ENCODE measurements at regions of chr12 and their contacts with region 1.

Region 1: GRCh38 chr12:53321074-53321814 is at the start of gene AAAS:
- DNase-seq: peak; percentile 91 to 99
- H3K4me3 ChIP-seq: peak within 1 kb of the TSS; percentile 65 to 67
- H3K27ac ChIP-seq: peak within 1 kb of the TSS; percentile 84 to 87
- H3K4me1 ChIP-seq: peaks cover 4 to 30% of the 10 kb centered on the region in 2 donors
- H3K27me3 ChIP-seq: no peaks in the 10 kb centered on the region
- CTCF ChIP-seq: peak; percentile 97 to 98 (median 97)
- total RNA-seq, gene AAAS: 21.2 TPM

Region 2: DNA sequence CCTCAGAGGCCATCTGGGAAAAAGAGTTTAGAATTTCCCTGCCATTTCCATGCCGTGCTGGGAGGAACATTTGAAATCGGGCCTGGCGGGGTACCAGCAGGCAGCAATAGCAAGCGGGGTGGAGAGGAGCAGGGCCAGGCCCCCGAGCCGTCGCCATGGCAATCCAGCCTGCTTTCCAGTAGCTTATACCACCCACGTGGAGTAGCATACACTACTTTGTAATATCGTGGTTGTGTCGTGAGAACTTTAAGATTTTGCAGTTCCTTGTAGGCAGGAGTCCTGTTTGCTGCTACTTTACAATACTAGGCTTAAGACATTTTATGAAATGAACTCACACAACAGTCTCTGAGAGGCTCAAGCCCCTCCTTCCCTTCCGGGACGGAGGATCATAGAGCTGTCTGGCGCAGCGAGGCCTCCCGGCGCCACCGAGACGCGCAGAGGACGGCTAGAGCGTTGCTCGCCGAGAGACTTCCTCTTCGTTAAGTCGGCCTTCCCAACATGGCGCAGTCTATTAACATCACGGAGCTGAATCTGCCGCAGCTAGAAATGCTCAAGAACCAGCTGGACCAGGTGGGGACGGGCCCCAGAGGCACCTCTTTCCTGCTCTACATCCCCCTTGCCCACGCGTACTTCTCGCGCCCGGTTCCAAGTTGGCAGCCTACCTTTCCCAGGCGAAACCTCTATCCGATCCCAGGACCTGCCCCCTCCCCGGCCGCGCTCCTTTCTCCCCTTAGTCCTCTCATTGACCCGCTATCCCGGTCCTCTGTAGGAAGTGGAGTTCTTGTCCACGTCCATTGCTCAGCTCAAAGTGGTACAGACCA is 26.0 kb before region 1 on chr12 and contains the start of gene PFDN5:
- intact Hi-C with region 1: loop called (anchors 1 kb)
- DNase-seq: peak; percentile 49 to 94
- H3K4me3 ChIP-seq: peak within 1 kb of the TSS; percentile 56 to 90
- H3K27ac ChIP-seq: peak within 1 kb of the TSS; percentile 85 to 92
- H3K4me1 ChIP-seq: peaks cover 10 to 20% of the 10 kb centered on the region in 2 donors
- H3K27me3 ChIP-seq: no peaks in the 10 kb centered on the region
- CTCF ChIP-seq: no peak
- total RNA-seq, gene PFDN5: 187 TPM

Region 3: DNA sequence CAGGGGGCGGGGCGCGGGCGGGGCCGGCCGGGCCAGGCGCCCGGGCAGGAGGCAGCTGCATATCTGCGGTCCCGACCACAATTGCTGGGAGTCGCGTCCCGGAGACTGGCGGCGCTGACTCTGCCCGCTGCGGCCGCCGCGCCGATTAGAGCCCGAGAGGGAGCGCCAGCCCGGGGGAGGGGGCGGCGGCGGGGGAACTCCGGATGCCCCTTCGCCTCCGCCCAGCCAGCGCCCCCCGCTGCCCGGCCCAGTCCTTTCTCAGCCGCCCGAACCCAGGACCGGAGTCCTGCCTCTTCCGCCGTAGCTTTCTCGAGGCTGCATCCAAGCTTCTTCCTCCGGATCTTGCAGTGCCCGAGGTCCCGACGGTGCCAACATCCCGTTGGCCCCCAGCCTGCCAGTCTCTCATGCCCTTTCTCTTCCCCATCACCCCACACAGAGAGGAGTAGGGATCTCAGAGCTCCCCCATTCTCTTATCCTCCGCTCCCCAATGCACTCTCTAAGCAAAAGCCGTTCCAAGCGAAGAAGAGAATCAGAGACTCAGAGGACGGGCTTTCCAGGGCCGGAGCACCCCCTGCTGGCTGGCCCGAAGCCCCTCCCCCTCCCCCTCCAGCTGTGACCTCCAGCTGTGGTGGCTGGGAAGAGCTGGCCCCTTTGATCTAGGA is 23.7 kb after region 1 on chr12:
- intact Hi-C with region 1: loop called (anchors 1 kb)
- DNase-seq: peak; percentile 19 to 89
- H3K4me3 ChIP-seq: peak overlapping the region; percentile 53 to 81
- H3K27ac ChIP-seq: peak overlapping the region; percentile 74 to 81
- H3K4me1 ChIP-seq: peaks cover 0 to 11% of the 10 kb centered on the region in 2 donors
- H3K27me3 ChIP-seq: no peaks in the 10 kb centered on the region
- CTCF ChIP-seq: peak; percentile 71 to 82 (median 82)

Region 4: GRCh38 chr12:53379389-53380103 is 58.3 kb after region 1 on chr12:
- intact Hi-C with region 1: loop called (anchors 2 kb)
- DNase-seq: peak; percentile 100
- H3K4me3 ChIP-seq: peak overlapping the region; percentile 86 to 87
- H3K27ac ChIP-seq: peak overlapping the region; percentile 95 to 99
- H3K4me1 ChIP-seq: peaks cover 23 to 37% of the 10 kb centered on the region in 2 donors
- H3K27me3 ChIP-seq: no peaks in the 10 kb centered on the region
- CTCF ChIP-seq: no peak

Region 5: DNA sequence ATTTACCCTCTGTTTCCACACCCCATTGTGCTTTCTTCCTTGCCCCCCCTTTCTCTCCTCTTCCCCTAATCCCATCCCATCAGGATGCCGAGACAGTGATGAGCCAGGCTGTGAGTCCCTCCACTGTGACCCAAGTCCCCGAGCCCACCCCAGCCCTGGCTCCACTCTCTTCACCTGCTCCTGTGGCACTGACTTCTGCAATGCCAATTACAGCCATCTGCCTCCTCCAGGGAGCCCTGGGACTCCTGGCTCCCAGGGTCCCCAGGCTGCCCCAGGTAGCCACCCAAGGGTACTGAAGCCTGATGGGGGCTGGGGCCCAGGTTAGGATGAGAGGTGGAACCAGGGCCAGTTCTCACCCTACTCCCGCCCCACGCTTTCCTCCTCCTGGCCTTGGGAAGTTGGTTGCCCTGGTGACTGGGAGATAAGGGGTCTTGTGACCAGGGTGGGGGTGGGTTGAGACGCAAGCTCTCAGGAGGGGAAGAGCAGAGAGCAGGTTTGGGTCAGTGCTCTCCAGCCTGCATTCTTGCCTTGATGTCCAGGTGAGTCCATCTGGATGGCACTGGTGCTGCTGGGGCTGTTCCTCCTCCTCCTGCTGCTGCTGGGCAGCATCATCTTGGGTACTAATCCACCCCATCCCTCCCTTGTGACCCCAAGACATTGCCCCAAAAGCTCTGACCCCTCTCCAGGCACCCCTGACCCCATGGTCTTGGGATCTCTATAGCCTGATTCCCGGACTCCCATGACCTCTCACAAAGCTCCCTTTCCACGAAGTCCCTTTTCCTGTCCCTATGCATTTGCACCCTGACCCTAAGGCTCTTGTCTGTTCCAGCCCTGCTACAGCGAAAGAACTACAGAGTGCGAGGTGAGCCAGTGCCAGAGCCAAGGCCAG is 103.6 kb after region 1 on chr12:
- intact Hi-C with region 1: loop called (anchors 1 kb)
- DNase-seq: no peak
- H3K4me3 ChIP-seq: peak overlapping the region in 1 of 2 donors; percentile 3
- H3K27ac ChIP-seq: no peak overlapping the region
- H3K4me1 ChIP-seq: no peaks in the 10 kb centered on the region
- H3K27me3 ChIP-seq: no peaks in the 10 kb centered on the region
- CTCF ChIP-seq: no peak

Region 6: GRCh38 chr12:53508534-53509199 is 187.4 kb after region 1 on chr12:
- intact Hi-C with region 1: loop called (anchors 2 kb)
- DNase-seq: peak; percentile 50 to 94
- H3K4me3 ChIP-seq: no peak overlapping the region
- H3K27ac ChIP-seq: peak overlapping the region; percentile 20 to 43
- H3K4me1 ChIP-seq: peaks cover 15 to 28% of the 10 kb centered on the region in 2 donors
- H3K27me3 ChIP-seq: no peaks in the 10 kb centered on the region
- CTCF ChIP-seq: peak; percentile 85 to 93 (median 88)

Measured in ascending aorta (tissue), 2 donors.